ENCODE measurements at regions of chr5 and their contacts with region 1.

Region 1: DNA sequence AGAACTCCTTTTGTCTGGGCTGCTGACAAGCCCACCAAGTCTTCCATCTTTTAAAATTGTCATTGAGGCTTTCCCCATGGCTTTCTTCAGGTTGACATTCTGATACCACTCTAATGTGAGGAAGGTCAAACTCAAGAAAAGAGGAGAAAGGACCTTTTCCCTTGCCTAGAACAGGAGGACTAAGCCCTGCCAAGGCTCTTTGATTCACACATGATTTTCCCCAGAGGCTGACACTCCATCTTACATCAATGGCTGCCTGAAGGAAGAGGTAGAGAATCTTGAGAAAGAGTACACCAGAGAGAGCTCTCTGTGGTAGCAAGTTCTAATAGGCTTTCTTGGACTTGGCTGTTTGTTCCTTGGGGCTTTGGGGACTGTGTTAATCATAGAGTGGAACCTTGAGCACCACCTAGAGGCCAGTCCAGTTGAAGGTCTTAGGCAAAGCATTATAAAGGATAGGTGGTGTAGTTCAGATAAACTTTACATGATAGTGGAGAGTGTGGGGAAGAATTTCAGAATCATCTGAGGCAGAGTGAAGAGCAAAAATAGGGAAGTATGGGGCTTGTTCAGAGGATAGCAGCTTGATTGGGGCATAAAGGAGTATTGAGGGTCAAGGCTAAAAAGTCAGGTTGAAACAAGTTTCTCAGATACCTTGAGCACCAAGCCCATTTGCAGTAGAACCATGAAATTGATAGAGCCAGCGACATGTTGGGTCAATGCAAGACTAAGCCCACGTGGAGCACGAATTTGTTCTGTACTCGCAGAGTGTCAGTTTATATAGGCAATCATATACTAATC is 36.7 kb downstream of the NDFIP1 start:
- DNase-seq: peak; percentile 68
- ATAC-seq: peak; percentile 97
- H3K4me3 ChIP-seq: no peak overlapping the region
- H3K27ac ChIP-seq: no peak overlapping the region
- H3K4me1 ChIP-seq: no peaks in the 10 kb centered on the region
- H3K27me3 ChIP-seq: no peaks in the 10 kb centered on the region
- CTCF ChIP-seq: peak; percentile 68
- POLR2A ChIP-seq: no peak
- RAD21 ChIP-seq: peak; percentile 52

Region 2: DNA sequence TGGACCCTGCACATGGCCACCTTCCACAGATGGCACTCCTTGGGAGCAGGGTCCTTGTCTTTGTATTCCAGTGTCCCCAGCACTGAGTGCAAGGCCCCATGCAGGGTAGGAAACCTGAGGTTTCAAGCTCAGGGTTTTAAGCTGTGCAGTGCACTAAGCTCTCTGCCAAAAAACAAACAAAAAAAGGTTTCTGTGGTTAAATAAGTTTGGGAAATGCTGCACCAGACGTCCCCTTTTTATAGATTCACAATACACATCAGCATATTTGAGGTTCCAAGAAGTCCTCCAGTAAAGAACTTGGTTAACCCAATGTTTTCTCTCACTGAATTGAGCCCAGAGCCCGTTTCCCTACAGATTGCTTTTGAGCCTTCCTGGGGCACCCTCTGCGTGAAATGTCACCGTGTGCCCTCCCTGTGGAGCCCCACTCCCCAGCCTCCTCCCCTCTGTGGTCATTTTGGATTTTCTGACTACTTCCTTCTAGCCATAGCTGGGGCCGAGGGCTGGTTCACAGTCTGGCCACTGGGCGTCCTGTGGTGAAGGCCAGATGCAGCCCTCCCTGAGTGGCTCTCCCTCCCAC is 204.5 kb before region 1 on chr5:
- CTCF ChIA-PET with region 1: no interaction called
- POLR2A ChIA-PET with region 1: no interaction called
- dilution Hi-C with region 1: no loop called
- in situ Hi-C with region 1: no loop called
- intact Hi-C with region 1: no loop called
- DNase-seq: peak; percentile 16
- ATAC-seq: peak; percentile 62
- H3K4me3 ChIP-seq: no peak overlapping the region
- H3K27ac ChIP-seq: no peak overlapping the region
- H3K4me1 ChIP-seq: peaks cover 2% of the 10 kb centered on the region; the same call in 1 of the 2 replicates
- H3K27me3 ChIP-seq: no peaks in the 10 kb centered on the region; the same call in 1 of the 2 replicates
- CTCF ChIP-seq: no peak
- POLR2A ChIP-seq: no peak
- RAD21 ChIP-seq: no peak

Region 3: GRCh38 chr5:141992349-141992963 is 152.8 kb before region 1 on chr5:
- CTCF ChIA-PET with region 1: interaction called, 3 read pairs
- POLR2A ChIA-PET with region 1: no interaction called
- dilution Hi-C with region 1: loop called (anchors 25 kb)
- in situ Hi-C with region 1: no loop called
- intact Hi-C with region 1: loop called (anchors 1 kb)
- DNase-seq: peak; percentile 62
- ATAC-seq: peak; percentile 69
- H3K4me3 ChIP-seq: no peak overlapping the region
- H3K27ac ChIP-seq: no peak overlapping the region
- H3K4me1 ChIP-seq: no peaks in the 10 kb centered on the region
- H3K27me3 ChIP-seq: no peaks in the 10 kb centered on the region
- CTCF ChIP-seq: peak; percentile 70
- POLR2A ChIP-seq: no peak
- RAD21 ChIP-seq: peak; percentile 61

Region 4: GRCh38 chr5:142699184-142699720 is 553.9 kb after region 1 on chr5:
- CTCF ChIA-PET with region 1: no interaction called
- POLR2A ChIA-PET with region 1: no interaction called
- dilution Hi-C with region 1: no loop called
- in situ Hi-C with region 1: loop called (anchors 10 kb)
- intact Hi-C with region 1: no loop called
- DNase-seq: peak; percentile 84
- ATAC-seq: peak; percentile 98
- H3K4me3 ChIP-seq: no peak overlapping the region
- H3K27ac ChIP-seq: no peak overlapping the region
- H3K4me1 ChIP-seq: peaks cover 10% of the 10 kb centered on the region
- H3K27me3 ChIP-seq: no peaks in the 10 kb centered on the region
- CTCF ChIP-seq: peak; percentile 99
- POLR2A ChIP-seq: peak; percentile 69
- RAD21 ChIP-seq: peak; percentile 100